ENCODE measurements at regions of chr5 and their contacts with region 1.

Region 1: GRCh38 chr5:9544502-9545135 is 1.3 kb downstream of the SEMA5A start:
- DNase-seq: peak; percentile 87 to 95 (median 89)
- ATAC-seq: peak; percentile 80
- H3K4me3 ChIP-seq: peak overlapping the region; percentile 56
- H3K4me1 ChIP-seq: peaks cover 12% of the 10 kb centered on the region
- CTCF ChIP-seq: peak; percentile 72

Region 2: GRCh38 chr5:9361835-9362234 is 182.8 kb before region 1 on chr5:
- intact Hi-C with region 1: loop called in 1 of 2 experiments (anchors 5 kb)
- DNase-seq: peak in 2 of 3 donors; percentile 48 to 83
- ATAC-seq: peak; percentile 80
- H3K4me3 ChIP-seq: no peak overlapping the region
- H3K4me1 ChIP-seq: no peaks in the 10 kb centered on the region
- CTCF ChIP-seq: peak; percentile 32

Region 3: GRCh38 chr5:9431496-9432258 is 112.9 kb before region 1 on chr5:
- intact Hi-C with region 1: no loop called
- DNase-seq: no peak
- ATAC-seq: peak; percentile 8
- H3K4me3 ChIP-seq: no peak overlapping the region
- H3K4me1 ChIP-seq: no peaks in the 10 kb centered on the region
- CTCF ChIP-seq: no peak

Region 4: DNA sequence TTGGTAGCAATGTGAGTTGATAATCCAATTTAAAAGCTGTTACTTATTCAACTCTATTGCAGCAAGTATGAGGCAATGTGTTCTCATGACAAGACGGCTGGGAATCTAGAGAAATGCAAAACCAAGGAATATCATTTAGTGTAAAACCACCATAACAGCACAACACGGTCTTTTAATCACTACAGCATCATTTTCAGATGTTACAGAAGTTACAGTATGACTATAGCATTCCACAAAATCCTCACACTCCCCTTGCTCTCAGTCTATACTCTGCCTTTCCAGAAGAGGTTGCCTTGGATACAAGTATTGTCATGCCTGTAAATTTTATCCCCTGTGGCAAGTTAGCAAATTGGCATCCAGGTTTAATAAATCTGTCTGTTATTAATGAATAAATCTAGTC is 114.1 kb after region 1 on chr5:
- intact Hi-C with region 1: no loop called
- DNase-seq: no peak
- ATAC-seq: no peak
- H3K4me3 ChIP-seq: no peak overlapping the region
- H3K4me1 ChIP-seq: no peaks in the 10 kb centered on the region
- CTCF ChIP-seq: no peak

Measured in mucosa of descending colon (tissue), 3 donors.